ENCODE measurements at regions of chr4 and their contacts with region 1.

Region 1: GRCh38 chr4:22237155-22237751 is 278.6 kb downstream of the ADGRA3 start:
- DNase-seq: no peak
- H3K4me3 ChIP-seq: no peak overlapping the region
- H3K27ac ChIP-seq: no peak overlapping the region
- H3K4me1 ChIP-seq: no peaks in the 10 kb centered on the region
- H3K27me3 ChIP-seq: no peaks in the 10 kb centered on the region
- CTCF ChIP-seq: no peak
- POLR2A ChIP-seq: no peak

Region 2: DNA sequence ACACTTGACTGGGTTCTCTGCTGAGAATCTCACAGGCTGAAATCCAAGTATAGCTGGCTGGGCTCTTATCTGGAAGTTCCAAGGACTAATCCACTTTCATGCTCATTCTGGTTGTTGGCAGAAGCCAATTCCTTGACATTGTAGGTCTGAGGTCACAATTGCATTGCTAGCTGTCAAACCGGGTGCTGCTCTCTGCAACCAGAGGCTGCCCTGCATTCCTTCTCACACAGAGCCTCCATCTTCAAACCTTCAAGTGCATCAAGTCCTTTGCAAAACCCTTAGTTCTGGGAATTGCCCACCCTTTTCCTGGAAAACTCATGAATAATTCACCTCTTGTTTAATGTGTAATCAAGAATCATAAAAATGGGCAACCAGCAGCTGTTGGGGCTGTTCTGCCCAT is 692.8 kb before region 1 on chr4:
- intact Hi-C with region 1: loop called (anchors 5 kb)
- DNase-seq: no peak
- H3K4me3 ChIP-seq: no peak overlapping the region
- H3K27ac ChIP-seq: no peak overlapping the region
- H3K4me1 ChIP-seq: no peaks in the 10 kb centered on the region
- H3K27me3 ChIP-seq: no peaks in the 10 kb centered on the region
- CTCF ChIP-seq: no peak
- POLR2A ChIP-seq: no peak

Measured in vagina (tissue), 2 donors.